ENCODE measurements at regions of chr7 and their contacts with region 1.

Region 1: DNA sequence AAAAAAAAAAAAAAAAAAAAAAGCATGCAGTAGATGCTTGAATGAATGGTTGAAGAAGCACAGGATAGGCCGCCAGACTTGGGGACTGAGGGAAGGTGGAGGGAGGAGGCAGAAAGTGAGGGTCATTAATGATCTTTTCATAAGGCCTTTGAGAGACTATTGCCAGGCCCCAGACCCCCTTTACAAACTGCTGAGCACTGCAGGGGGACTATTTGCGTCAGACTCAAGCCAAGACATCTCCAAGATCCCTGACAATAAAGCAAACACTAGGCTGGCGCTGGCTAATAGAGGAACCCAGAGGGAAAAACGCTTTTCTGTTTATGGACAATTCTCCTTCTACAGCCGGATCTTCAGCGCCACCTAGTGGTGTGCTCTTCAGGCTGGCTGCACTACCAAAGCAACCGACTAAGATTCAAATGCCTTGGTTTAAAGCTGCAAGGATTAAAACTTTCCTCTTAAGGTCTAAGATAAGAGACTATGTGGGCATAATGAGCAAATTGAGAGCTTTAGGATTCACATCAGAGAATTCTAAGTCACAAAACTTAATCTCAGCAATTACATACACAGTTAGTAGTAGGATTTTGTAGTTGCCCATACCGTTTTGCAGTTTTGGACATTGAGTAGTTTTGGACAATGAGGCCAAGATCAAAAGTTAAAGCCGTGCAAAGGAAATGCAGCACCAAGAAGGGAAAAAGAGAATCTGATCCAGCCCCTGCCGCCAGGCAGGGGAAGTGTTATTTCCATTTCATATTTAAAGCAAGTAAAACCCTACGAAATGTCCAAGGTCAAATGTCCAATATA is 17.9 kb upstream of the AGK start:
- DNase-seq: peak; percentile 22 to 33
- ATAC-seq: peak; percentile 83 to 89
- H3K4me3 ChIP-seq: no peak overlapping the region
- H3K27ac ChIP-seq: no peak overlapping the region
- H3K4me1 ChIP-seq: peaks cover 0 to 15% of the 10 kb centered on the region in 2 donors
- H3K27me3 ChIP-seq: no peaks in the 10 kb centered on the region
- CTCF ChIP-seq: peak; percentile 71 to 96 (median 75)
- POLR2A ChIP-seq: no peak

Region 2: DNA sequence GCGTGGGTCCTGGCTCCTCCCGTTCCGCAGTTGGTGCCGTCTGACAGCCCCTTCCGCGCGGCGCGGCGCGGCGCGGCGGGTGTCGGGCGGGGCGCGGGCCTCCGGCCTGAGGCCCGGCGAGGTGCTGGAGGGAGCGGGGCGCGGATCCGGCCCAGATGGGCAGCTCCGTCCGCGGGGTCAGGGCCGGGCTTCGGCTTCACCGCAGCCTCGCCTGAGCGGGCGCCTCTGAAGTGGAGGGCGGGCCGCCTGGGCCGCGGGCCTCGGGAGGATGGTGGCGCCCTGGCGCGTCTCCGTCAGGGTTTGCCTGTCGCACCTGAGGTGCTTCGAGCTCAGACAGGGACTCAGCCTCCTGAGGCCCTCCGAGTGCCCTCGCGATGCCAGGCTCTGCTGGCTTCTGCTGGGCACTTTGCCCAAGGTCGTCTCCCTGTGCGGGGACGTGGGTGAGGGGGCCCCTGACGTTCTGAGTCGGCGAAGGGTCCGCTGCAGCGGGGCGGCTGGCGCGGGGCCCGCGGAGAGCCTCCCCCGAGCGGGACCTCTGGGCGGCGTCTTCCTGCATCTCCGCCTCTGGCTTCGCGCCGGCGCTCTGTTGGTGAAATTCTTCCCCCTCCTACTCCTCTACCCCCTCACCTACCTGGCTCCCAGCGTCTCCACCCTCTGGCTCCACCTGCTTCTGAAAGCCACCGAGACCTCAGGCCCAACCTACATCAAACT is 860.1 kb before region 1 on chr7:
- in situ Hi-C with region 1: no loop called
- intact Hi-C with region 1: loop called (anchors 10 kb)
- DNase-seq: peak in 1 of 2 donors; percentile 31
- ATAC-seq: peak; percentile 72 to 75
- H3K4me3 ChIP-seq: peak overlapping the region; percentile 66 to 89 (median 75)
- H3K27ac ChIP-seq: peak overlapping the region; percentile 69 to 83 (median 76)
- H3K4me1 ChIP-seq: peaks cover 16 to 26% of the 10 kb centered on the region in 2 donors
- H3K27me3 ChIP-seq: no peaks in the 10 kb centered on the region
- CTCF ChIP-seq: no peak
- POLR2A ChIP-seq: peak; percentile 18 to 45

Region 3: GRCh38 chr7:140810830-140811556 is 722.4 kb before region 1 on chr7:
- in situ Hi-C with region 1: loop called (anchors 5 to 25 kb)
- intact Hi-C with region 1: loop called (anchors 2 kb)
- DNase-seq: peak; percentile 18 to 41
- ATAC-seq: peak; percentile 93 to 97
- H3K4me3 ChIP-seq: no peak overlapping the region
- H3K27ac ChIP-seq: no peak overlapping the region
- H3K4me1 ChIP-seq: no peaks in the 10 kb centered on the region
- H3K27me3 ChIP-seq: no peaks in the 10 kb centered on the region
- CTCF ChIP-seq: peak; percentile 53 to 78 (median 70)
- POLR2A ChIP-seq: no peak

Region 4: GRCh38 chr7:141072548-141073172 is 460.7 kb before region 1 on chr7:
- in situ Hi-C with region 1: no loop called
- intact Hi-C with region 1: loop called (anchors 1 kb)
- DNase-seq: peak; percentile 46 to 69
- ATAC-seq: peak; percentile 86 to 91
- H3K4me3 ChIP-seq: peak overlapping the region; percentile 69 to 76 (median 71)
- H3K27ac ChIP-seq: peak overlapping the region; percentile 65 to 81 (median 76)
- H3K4me1 ChIP-seq: peaks cover 14 to 45% of the 10 kb centered on the region in 2 donors
- H3K27me3 ChIP-seq: peaks cover 0 to 3% (median 0%) of the 10 kb centered on the region in 3 donors
- CTCF ChIP-seq: no peak
- POLR2A ChIP-seq: peak; percentile 17 to 33

Region 5: DNA sequence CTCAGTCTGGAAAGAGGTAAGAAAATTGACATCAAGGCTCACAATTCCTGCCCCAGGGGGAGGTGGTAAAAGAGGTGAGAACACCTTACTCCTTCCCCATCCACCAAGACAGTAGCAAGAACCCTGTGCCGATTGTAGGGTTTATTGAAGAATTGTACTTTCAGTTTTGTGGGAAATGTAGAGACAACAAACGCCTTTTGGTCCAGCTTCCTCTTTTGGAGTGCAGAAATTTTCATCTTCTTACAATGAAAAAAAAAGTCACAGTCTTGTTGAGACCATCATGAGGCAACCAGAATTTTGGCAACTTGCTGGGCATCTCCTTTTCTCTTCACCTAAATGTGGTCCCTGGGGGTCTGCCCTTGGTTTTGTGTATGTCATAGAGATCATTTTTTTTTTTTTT is 241.8 kb before region 1 on chr7:
- in situ Hi-C with region 1: no loop called
- intact Hi-C with region 1: no loop called
- DNase-seq: no peak
- ATAC-seq: no peak
- H3K4me3 ChIP-seq: no peak overlapping the region
- H3K27ac ChIP-seq: no peak overlapping the region
- H3K4me1 ChIP-seq: no peaks in the 10 kb centered on the region
- H3K27me3 ChIP-seq: no peaks in the 10 kb centered on the region
- CTCF ChIP-seq: no peak
- POLR2A ChIP-seq: no peak

Region 6: GRCh38 chr7:141320287-141320686 is 213.1 kb before region 1 on chr7:
- in situ Hi-C with region 1: loop called in 1 of 4 experiments (anchors 10 kb)
- intact Hi-C with region 1: loop called (anchors 10 kb)
- DNase-seq: no peak
- ATAC-seq: no peak
- H3K4me3 ChIP-seq: no peak overlapping the region
- H3K27ac ChIP-seq: no peak overlapping the region
- H3K4me1 ChIP-seq: no peaks in the 10 kb centered on the region
- H3K27me3 ChIP-seq: no peaks in the 10 kb centered on the region
- CTCF ChIP-seq: no peak
- POLR2A ChIP-seq: no peak

Region 7: DNA sequence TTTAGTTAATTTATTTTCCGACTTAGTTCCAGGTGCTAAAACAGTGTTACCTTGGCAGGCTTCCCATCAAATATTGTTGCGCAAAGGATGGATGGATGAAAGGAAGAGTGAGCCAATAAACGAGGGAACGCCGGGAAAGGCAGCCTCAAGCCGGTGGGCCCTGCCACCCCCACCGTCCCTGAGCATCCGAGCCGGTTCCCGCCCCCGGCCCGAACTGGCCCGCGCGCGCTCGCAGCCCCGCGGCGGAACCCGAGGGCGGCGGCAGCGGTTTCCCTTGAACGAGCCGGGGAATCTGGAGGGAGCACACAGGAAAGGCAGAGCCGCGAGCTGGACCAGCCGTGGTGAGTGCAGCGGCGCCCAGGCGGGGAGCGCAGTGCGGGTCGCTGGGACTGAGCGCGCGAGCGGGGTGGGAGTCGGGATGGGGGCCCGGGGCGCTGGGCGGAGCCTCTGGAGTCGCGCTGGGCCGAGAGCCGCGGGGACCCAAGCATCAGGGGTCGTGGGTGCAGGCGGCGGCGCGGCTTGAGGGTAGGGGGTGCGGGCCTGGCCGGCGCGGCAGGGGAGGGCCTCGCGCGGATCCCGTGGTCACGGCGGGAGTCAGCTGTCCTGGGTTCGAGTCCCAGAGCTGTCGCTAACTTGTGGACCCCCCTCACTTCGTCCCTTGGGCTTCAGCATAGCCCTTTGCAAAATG is 17.9 kb after region 1 on chr7 and contains the start of gene AGK:
- in situ Hi-C with region 1: no loop called
- intact Hi-C with region 1: no loop called
- DNase-seq: peak; percentile 36 to 52
- ATAC-seq: peak; percentile 77 to 93
- H3K4me3 ChIP-seq: peak within 1 kb of the TSS; percentile 72 to 86 (median 78)
- H3K27ac ChIP-seq: peak within 1 kb of the TSS; percentile 59 to 85 (median 72)
- H3K4me1 ChIP-seq: peaks cover 14 to 17% of the 10 kb centered on the region in 2 donors
- H3K27me3 ChIP-seq: no peaks in the 10 kb centered on the region
- CTCF ChIP-seq: no peak
- POLR2A ChIP-seq: peak in 1 of 2 donors; percentile 28
- total RNA-seq, gene AGK: 6.5 to 17.1 (median 11.5) TPM

Measured in gastrocnemius medialis (tissue), 4 donors.